ENCODE measurements at regions of chr2 and their contacts with region 1.

Region 1: GRCh38 chr2:157055660-157056199 is 201.8 kb upstream of the GALNT5 start:
- DNase-seq: peak; percentile 61
- H3K4me3 ChIP-seq: peak overlapping the region in 1 of 3 experiments; percentile 40
- H3K27ac ChIP-seq: peak overlapping the region; percentile 66
- H3K4me1 ChIP-seq: peaks cover 35% of the 10 kb centered on the region
- H3K27me3 ChIP-seq: peaks cover 0 to 1% of the 10 kb centered on the region in 2 experiments
- CTCF ChIP-seq: peak; percentile 26 to 29
- POLR2A ChIP-seq: no peak

Region 2: DNA sequence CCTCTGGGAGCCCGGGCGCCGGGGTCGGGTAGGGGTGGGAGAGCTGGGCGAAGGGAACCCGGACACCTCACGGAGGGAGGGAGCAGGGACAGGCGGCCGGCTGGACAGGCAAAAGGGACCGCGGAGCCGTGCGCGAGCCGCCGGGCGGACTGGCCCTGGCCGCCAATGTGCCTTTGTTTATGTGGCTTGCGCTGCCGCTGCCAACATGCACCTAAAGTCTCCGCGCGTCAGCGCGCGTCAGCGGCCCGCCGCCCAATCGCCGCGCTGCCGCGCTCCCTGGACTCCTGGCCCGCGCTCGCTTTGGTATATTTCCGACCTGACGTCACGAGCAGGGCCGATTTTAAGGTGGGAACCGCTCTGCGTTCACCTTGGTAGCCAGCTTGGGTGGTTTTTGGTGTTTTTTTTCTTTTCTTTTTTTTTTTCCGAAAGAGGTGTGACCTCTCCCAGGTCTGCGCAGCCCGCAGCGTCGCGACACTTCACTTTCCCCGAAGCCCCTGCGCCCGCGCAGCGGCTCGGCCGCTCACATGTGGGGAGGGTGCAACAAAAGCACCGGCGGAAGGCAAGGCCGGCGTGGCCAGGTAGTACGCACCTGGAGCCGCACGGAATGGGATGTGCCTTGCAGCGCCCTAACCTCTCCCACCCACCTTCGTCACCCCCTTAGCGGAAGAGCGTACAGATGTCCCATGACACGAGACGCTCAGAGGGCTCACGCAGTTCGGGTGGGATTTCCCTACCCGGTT is 723.0 kb before region 1 on chr2 and contains the start of gene NR4A2:
- CTCF ChIA-PET with region 1: interaction called, 22 read pairs
- POLR2A ChIA-PET with region 1: no interaction called
- dilution Hi-C with region 1: no loop called
- intact Hi-C with region 1: no loop called
- DNase-seq: peak; percentile 87
- H3K4me3 ChIP-seq: peak within 1 kb of the TSS; percentile 58 to 75 (median 72)
- H3K27ac ChIP-seq: peak within 1 kb of the TSS; percentile 98
- H3K4me1 ChIP-seq: peaks cover 14% of the 10 kb centered on the region
- H3K27me3 ChIP-seq: peaks cover 3 to 14% of the 10 kb centered on the region in 2 experiments
- CTCF ChIP-seq: no peak
- POLR2A ChIP-seq: peak; percentile 36
- total RNA-seq, gene NR4A2: 1.0 and 1.8 TPM in 2 replicates

Region 3: DNA sequence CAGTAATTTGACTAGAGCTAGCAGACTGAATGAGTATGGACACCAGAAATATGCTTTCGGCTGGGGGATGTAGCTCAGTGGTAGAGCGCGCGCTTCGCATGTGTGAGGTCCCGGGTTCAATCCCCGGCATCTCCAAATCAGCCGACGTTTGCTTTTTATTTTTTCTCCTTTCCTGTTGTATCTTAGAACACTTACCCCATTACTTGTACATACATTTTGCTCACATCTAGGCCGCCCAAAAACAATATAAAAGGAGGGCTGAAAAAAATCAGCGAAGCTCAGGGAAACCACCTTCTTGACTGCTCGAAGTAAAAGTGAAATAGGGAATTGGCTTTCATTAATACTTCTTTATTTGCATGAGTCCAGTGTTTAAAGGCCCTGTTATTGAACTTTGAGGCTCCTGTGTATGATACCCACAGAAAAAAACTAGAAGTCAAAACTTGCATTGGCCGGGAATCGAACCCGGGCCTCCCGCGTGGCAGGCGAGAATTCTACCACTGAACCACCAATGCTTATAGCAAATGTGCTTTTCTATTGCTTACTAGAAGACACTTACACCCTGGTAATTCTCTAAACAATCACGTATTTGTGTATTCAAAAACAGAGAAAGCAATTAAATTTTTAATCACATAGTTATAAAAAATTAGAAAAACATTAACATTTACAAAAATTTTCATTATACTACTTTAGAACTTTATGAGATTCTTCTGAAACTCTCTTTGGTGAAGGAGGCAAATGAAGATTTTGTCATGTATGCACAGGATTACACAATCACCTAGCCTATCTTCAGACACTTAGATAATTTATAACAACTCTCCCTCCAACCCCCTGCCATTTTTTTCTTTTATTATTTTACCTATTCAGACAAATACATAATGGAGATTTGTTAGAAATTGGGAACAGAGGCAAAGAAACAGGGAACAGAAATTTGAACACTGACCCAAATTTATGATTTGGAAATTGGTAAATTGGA is 654.7 kb before region 1 on chr2:
- CTCF ChIA-PET with region 1: interaction called, 3 read pairs
- POLR2A ChIA-PET with region 1: no interaction called
- dilution Hi-C with region 1: no loop called
- intact Hi-C with region 1: loop called (anchors 1 kb)
- DNase-seq: peak; percentile 91
- H3K4me3 ChIP-seq: peak overlapping the region; percentile 48 to 71 (median 49)
- H3K27ac ChIP-seq: peak overlapping the region; percentile 41
- H3K4me1 ChIP-seq: peaks cover 5% of the 10 kb centered on the region
- H3K27me3 ChIP-seq: peaks cover 0 to 5% of the 10 kb centered on the region in 2 experiments
- CTCF ChIP-seq: no peak
- POLR2A ChIP-seq: no peak

Region 4: GRCh38 chr2:156892467-156893281 is 163.1 kb before region 1 on chr2:
- CTCF ChIA-PET with region 1: no interaction called
- POLR2A ChIA-PET with region 1: no interaction called
- dilution Hi-C with region 1: no loop called
- intact Hi-C with region 1: loop called (anchors 1 kb)
- DNase-seq: peak; percentile 46
- H3K4me3 ChIP-seq: peak overlapping the region in 1 of 3 experiments; percentile 56
- H3K27ac ChIP-seq: no peak overlapping the region
- H3K4me1 ChIP-seq: peaks cover 9% of the 10 kb centered on the region
- H3K27me3 ChIP-seq: peaks cover 14 to 35% of the 10 kb centered on the region in 2 experiments
- CTCF ChIP-seq: peak in 1 of 2 donors; percentile 5
- POLR2A ChIP-seq: no peak

Region 5: GRCh38 chr2:157032017-157032416 is 23.7 kb before region 1 on chr2:
- CTCF ChIA-PET with region 1: interaction called, 8 read pairs
- POLR2A ChIA-PET with region 1: no interaction called
- dilution Hi-C with region 1: no loop called
- intact Hi-C with region 1: loop called (anchors 1 kb)
- DNase-seq: peak; percentile 82
- H3K4me3 ChIP-seq: no peak overlapping the region
- H3K27ac ChIP-seq: peak overlapping the region; percentile 50
- H3K4me1 ChIP-seq: peaks cover 9% of the 10 kb centered on the region
- H3K27me3 ChIP-seq: no peaks in the 10 kb centered on the region
- CTCF ChIP-seq: no peak
- POLR2A ChIP-seq: no peak

Region 6: DNA sequence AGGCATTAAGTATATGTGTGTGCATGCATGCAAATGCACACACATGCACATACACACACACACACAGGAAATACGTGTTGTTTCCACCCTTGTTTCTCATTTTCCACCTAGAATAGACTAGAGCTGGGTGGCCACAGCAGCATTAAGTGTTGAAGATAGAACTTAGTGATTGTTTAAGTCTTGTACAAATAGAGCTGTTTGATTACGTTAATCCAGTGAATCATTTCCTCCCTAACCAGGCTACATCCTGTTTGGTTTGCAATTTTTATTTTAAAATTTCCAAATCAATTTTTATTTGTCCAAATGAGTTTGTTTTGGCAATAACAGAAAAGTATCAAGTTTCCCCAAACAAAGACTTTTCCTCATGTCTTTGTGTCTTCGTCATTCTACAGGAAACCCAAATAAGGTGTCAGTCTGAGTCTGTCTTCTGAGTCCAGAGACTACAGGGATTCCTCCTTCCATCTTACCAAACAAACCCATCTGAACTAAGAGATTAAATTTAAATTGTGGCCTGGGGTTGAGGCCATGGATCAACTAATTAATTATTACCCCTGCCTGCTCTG is 127.2 kb after region 1 on chr2:
- CTCF ChIA-PET with region 1: interaction called, 24 read pairs
- POLR2A ChIA-PET with region 1: no interaction called
- dilution Hi-C with region 1: no loop called
- intact Hi-C with region 1: loop called (anchors 1 kb)
- DNase-seq: peak; percentile 94
- H3K4me3 ChIP-seq: no peak overlapping the region
- H3K27ac ChIP-seq: peak overlapping the region; percentile 97
- H3K4me1 ChIP-seq: peaks cover 20% of the 10 kb centered on the region
- H3K27me3 ChIP-seq: no peaks in the 10 kb centered on the region
- CTCF ChIP-seq: no peak
- POLR2A ChIP-seq: peak; percentile 44

Region 7: DNA sequence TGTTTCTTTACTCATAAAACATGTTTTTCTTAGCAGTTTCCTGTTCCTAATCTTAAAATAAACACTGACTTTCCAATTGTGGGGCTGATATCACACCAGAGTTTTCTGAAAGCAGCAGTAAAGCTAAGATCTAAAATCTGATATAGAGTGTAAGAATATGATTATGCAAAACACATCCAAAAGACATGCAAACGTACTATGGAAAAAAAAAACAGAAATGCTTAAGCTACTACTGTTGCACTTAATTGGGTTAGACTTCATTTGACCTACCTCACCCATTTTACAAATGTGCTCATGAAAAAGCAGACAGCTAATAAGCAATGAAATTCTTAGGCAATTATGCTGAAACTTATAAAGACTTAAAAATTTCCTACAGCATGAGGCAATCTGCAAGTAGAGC is 377.7 kb after region 1 on chr2:
- CTCF ChIA-PET with region 1: no interaction called
- POLR2A ChIA-PET with region 1: no interaction called
- dilution Hi-C with region 1: no loop called
- intact Hi-C with region 1: no loop called
- DNase-seq: peak; percentile 63
- H3K4me3 ChIP-seq: no peak overlapping the region
- H3K27ac ChIP-seq: no peak overlapping the region
- H3K4me1 ChIP-seq: peaks cover 13% of the 10 kb centered on the region
- H3K27me3 ChIP-seq: peaks cover 0 to 1% of the 10 kb centered on the region in 2 experiments
- CTCF ChIP-seq: no peak
- POLR2A ChIP-seq: no peak

Measured in endothelial cell of umbilical vein (primary cell).